Endothelial cell of umbilical vein (primary cell): ENCODE measurements at regions of chr11 and their contacts with region 1.

Region 1: GRCh38 chr11:102914238-102915043 is 39.7 kb upstream of the MMP12 start:
- DNase-seq: peak; percentile 53
- H3K4me3 ChIP-seq: no peak overlapping the region
- H3K27ac ChIP-seq: no peak overlapping the region
- H3K4me1 ChIP-seq: no peaks in the 10 kb centered on the region
- H3K27me3 ChIP-seq: no peaks in the 10 kb centered on the region
- CTCF ChIP-seq: peak; percentile 47 to 70
- POLR2A ChIP-seq: no peak

Region 2: GRCh38 chr11:102306048-102306585 is 608.3 kb before region 1 on chr11:
- CTCF ChIA-PET with region 1: no interaction called
- POLR2A ChIA-PET with region 1: no interaction called
- dilution Hi-C with region 1: no loop called
- intact Hi-C with region 1: no loop called
- DNase-seq: no peak
- H3K4me3 ChIP-seq: no peak overlapping the region
- H3K27ac ChIP-seq: no peak overlapping the region
- H3K4me1 ChIP-seq: no peaks in the 10 kb centered on the region
- H3K27me3 ChIP-seq: peaks cover 18 to 22% of the 10 kb centered on the region in 2 experiments
- CTCF ChIP-seq: no peak
- POLR2A ChIP-seq: no peak

Region 3: GRCh38 chr11:102794447-102794781 is 120.0 kb before region 1 on chr11:
- CTCF ChIA-PET with region 1: interaction called, 11 read pairs
- POLR2A ChIA-PET with region 1: no interaction called
- dilution Hi-C with region 1: no loop called
- intact Hi-C with region 1: loop called (anchors 10 kb)
- DNase-seq: peak; percentile 48
- H3K4me3 ChIP-seq: no peak overlapping the region
- H3K27ac ChIP-seq: no peak overlapping the region
- H3K4me1 ChIP-seq: peaks cover 17% of the 10 kb centered on the region
- H3K27me3 ChIP-seq: no peaks in the 10 kb centered on the region
- CTCF ChIP-seq: peak; percentile 60 to 66
- POLR2A ChIP-seq: no peak

Region 4: GRCh38 chr11:102882389-102883024 is 31.9 kb before region 1 on chr11:
- CTCF ChIA-PET with region 1: no interaction called
- POLR2A ChIA-PET with region 1: no interaction called
- dilution Hi-C with region 1: no loop called
- intact Hi-C with region 1: no loop called
- DNase-seq: no peak
- H3K4me3 ChIP-seq: no peak overlapping the region
- H3K27ac ChIP-seq: no peak overlapping the region
- H3K4me1 ChIP-seq: no peaks in the 10 kb centered on the region
- H3K27me3 ChIP-seq: peaks cover 2 to 3% of the 10 kb centered on the region in 2 experiments
- CTCF ChIP-seq: no peak
- POLR2A ChIP-seq: no peak

Region 5: GRCh38 chr11:102924851-102925381 is 10.5 kb after region 1 on chr11:
- CTCF ChIA-PET with region 1: interaction called, 31 read pairs
- POLR2A ChIA-PET with region 1: no interaction called
- dilution Hi-C with region 1: no loop called
- intact Hi-C with region 1: no loop called
- DNase-seq: no peak
- H3K4me3 ChIP-seq: no peak overlapping the region
- H3K27ac ChIP-seq: no peak overlapping the region
- H3K4me1 ChIP-seq: no peaks in the 10 kb centered on the region
- H3K27me3 ChIP-seq: peaks cover 0 to 5% of the 10 kb centered on the region in 2 experiments
- CTCF ChIP-seq: no peak
- POLR2A ChIP-seq: no peak

Region 6: DNA sequence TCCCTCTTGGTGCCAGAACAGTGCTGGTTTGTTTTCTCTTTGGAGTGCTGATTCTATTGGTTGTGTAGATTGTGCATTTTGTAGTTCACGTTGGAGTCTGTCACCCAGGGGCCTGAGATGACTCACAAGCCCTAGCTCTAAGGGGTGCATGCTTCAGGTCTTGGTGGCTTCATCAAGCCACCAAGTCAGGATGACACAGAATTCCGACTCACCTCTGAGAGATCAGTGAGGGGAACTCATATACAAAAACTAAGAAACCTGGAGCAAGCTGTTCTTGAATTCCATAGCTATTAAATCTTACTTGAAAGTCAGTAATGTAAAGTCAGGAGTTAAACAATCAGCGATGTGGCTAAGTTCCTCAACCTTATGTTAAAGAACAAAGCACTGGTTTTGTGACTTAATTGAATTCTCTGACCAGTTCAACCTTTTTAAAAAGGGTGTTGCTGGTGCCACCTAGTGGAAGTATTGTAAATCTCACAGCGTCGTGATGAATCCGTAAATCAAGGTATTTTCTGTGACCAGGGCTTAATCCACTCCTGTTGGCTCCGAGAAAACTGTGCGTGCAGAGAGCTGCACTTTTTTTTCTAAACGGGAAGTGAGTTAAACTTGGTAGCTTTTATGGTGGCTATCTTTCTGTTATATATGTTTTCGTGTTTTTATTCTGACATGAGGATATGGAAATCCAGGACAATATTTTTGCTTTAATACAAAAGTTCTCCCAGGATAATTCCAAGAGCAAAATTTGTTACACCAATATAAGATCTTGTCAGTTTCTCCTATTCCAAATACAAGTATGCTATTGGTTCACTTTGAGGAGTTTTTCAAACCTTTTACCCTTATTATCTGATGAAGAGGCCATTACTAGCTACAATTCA is 26.5 kb after region 1 on chr11:
- CTCF ChIA-PET with region 1: interaction called, 53 read pairs
- POLR2A ChIA-PET with region 1: no interaction called
- dilution Hi-C with region 1: no loop called
- intact Hi-C with region 1: loop called (anchors 1 kb)
- DNase-seq: peak; percentile 79
- H3K4me3 ChIP-seq: no peak overlapping the region
- H3K27ac ChIP-seq: no peak overlapping the region
- H3K4me1 ChIP-seq: no peaks in the 10 kb centered on the region
- H3K27me3 ChIP-seq: no peaks in the 10 kb centered on the region
- CTCF ChIP-seq: peak; percentile 65 to 67
- POLR2A ChIP-seq: no peak

Region 7: DNA sequence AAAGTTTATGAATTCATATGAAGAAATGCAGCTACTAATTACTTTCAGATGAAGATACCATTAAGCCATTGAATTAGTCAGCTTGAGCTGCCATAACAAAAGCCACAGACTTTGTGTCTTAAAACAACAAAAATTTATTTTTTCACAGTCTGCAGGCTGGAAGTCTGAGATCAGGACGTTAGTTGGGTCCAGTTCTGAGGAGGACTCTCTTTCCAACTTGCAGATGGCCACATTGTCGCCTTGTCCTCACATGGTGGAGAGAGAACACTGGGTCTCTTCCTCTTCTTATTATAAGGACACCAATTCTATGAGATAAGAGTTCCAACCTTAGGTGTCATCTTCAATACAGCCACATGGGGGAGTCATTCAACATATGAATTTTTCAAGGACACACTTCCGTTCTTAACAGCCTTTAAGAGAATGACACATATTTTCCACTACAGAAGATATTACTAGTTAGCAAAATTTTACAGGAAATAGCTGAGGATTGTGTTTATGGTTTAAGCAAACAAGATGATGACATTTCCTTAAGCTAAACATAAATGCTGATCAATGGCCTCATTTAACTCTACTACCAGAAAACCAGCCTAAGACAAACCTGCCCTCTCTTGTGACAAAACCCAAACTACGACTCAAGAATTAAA is 121.5 kb after region 1 on chr11:
- CTCF ChIA-PET with region 1: interaction called, 24 read pairs
- POLR2A ChIA-PET with region 1: no interaction called
- dilution Hi-C with region 1: no loop called
- intact Hi-C with region 1: loop called (anchors 5 kb)
- DNase-seq: peak; percentile 91
- H3K4me3 ChIP-seq: no peak overlapping the region
- H3K27ac ChIP-seq: peak overlapping the region; percentile 59
- H3K4me1 ChIP-seq: peaks cover 9% of the 10 kb centered on the region
- H3K27me3 ChIP-seq: no peaks in the 10 kb centered on the region
- CTCF ChIP-seq: peak; percentile 31 to 58
- POLR2A ChIP-seq: no peak